AG04450 (cell line): ENCODE measurements at regions of chr1 and their contacts with region 1.

Region 1: DNA sequence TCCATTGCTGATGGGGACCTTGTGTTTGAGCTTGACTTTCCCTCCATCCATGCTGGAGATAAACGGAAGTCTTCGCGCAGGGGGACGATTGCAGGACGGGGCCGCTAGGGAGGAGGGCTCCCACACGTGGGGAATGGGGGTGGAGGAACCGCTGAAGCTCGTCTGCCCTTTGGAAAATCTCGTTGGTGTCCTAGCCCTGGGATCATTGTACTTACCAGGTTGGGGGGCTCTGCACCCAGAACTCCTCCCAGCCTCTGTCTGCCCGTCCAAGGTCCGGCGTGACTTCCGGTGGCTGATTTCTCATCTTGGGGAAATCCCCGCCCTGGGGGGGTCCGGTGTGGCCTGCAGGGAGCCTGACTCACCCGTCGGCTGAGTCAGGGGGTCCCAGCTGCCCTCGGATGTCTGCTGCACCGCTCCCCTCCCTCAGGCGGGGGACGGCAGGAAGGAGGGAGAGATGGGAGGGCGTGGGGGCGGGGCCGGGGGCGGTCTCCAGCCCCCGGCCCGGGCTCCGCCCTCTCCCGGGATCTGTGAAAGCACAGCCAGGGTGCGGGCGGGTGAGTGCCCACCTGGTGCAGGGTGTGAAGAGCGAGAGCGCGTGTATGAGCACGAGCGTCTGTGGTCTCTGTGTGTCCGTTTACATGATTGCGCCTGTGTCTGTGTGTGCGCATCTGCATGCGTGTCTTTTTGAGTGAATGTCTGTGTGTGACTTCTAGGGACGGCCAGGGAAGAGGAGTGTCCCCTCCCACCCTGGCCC is 35.8 kb downstream of the PIK3CD start:
- DNase-seq: peak; percentile 53
- H3K4me3 ChIP-seq: peak overlapping the region; percentile 66
- H3K27ac ChIP-seq: peak overlapping the region; percentile 81
- H3K27me3 ChIP-seq: no peaks in the 10 kb centered on the region
- CTCF ChIP-seq: peak; percentile 25

Region 2: DNA sequence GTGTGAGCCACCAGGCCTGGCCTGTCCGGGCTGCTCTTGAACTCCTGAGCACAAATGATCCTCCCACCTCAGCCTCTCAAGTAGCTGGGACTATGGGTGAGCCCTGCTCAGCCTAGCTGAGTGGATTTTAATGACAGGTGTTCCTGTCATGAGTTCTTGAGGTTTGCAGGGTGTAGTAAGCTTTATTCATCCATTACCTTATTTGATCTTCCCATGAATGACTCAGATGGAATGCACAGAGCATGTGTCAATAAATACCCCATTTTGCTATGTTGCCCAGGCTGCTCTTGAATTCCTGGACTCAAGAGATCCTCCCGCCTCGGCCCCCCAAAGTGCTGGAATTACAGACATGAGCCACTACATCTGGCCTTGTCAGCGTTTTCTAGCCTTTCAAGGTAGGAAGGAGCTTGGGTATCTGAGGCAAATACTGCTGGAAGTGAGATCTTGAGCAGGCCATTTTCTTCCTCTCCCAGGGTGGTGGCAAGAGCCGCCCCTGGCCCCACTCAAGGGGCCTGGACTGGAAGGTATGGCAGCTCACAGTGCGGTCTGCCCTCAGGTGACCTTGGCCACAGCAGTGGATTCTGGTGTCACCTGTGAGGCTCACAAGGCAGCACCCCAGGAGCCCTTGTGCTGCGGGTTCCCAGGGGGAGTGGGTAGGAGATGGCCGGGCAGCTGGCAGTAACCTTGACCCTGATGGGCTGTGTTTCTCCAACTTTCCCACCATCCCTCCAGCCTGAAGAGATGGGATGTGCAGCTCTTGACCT is 15.7 kb before region 1 on chr1:
- CTCF ChIA-PET with region 1: no interaction called
- POLR2A ChIA-PET with region 1: interaction called, 19 read pairs
- DNase-seq: peak; percentile 68
- H3K4me3 ChIP-seq: no peak overlapping the region
- H3K27ac ChIP-seq: peak overlapping the region; percentile 80
- H3K27me3 ChIP-seq: no peaks in the 10 kb centered on the region
- CTCF ChIP-seq: no peak

Region 3: DNA sequence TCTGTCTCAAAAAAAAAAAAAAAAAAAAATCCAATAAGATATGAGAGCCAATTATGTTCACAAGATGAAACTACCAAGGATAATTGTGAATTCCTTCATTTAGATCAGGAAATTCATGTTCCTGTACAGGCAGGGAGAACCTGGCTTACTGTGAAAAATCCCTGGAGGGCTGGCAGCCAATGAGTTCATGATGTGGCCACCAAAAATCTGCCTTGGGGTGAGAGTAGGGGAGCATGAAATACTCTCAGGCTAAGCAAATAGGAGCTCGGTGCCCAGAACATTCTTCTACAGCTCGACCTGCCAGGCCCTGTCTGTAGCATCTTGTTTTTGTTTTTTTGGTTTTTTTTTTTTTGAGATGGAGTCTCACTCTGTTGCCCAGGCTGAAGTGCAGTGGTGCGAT is 14.4 kb after region 1 on chr1:
- CTCF ChIA-PET with region 1: interaction called, 10 read pairs
- POLR2A ChIA-PET with region 1: no interaction called
- DNase-seq: no peak
- H3K4me3 ChIP-seq: no peak overlapping the region
- H3K27ac ChIP-seq: no peak overlapping the region
- H3K27me3 ChIP-seq: no peaks in the 10 kb centered on the region
- CTCF ChIP-seq: no peak